Sciatic nerve (tissue), 2 donors: ENCODE measurements at regions of chr3 and their contacts with region 1.

Region 1: GRCh38 chr3:30948426-30948825 is 54.0 kb upstream of the GADL1 start:
- DNase-seq: no peak
- ATAC-seq: no peak

Region 2: GRCh38 chr3:30193625-30194044 is 754.8 kb before region 1 on chr3:
- intact Hi-C with region 1: loop called (anchors 5 kb)
- DNase-seq: no peak
- ATAC-seq: no peak

Region 3: GRCh38 chr3:30711151-30711550 is 237.3 kb before region 1 on chr3:
- intact Hi-C with region 1: no loop called
- DNase-seq: no peak
- ATAC-seq: no peak

Region 4: DNA sequence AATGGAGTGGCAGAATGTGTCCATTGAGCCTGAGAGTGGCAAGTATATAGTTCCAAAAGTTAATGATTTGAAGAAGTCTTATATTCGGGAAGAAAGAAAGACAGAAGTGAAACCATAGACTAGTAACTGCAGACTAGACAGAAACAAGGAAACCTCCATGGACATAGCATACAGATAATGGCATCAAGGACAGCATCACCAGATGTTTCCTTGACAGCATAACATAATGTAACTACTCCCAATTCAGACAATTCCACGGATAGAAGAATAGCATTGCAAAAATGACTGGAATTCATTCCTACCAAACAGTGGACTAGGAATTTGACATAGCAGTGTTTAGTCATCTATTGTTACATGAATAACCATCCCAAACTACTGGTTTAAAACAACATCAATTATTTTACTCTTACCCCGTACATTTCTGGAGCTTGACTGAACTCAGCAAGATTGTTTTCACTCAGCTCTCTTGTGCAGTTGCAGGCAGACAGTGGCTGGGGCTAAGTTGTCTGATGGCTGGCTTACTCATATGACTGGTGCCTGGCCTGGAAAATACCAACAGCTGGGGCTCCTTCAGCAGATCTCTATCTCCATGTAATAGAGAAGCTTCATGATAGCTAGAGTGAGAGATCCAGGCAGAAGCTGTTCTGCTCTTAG is 55.7 kb after region 1 on chr3:
- intact Hi-C with region 1: no loop called
- DNase-seq: no peak
- ATAC-seq: peak; percentile 71

Region 5: GRCh38 chr3:31307131-31307785 is 358.8 kb after region 1 on chr3:
- intact Hi-C with region 1: no loop called
- DNase-seq: no peak
- ATAC-seq: peak; percentile 56